ENCODE measurements at regions of chr5 and their contacts with region 1.

Region 1: GRCh38 chr5:150778517-150779396 is at the start of gene SMIM3:
- DNase-seq: peak; percentile 32 to 76 (median 48)
- H3K4me3 ChIP-seq: peak within 1 kb of the TSS; percentile 67
- H3K4me3 Mint-ChIP-seq: peak within 1 kb of the TSS; percentile 89 to 98 (median 95)
- H3K27ac ChIP-seq: peak within 1 kb of the TSS; percentile 59
- H3K27ac Mint-ChIP-seq: peak within 1 kb of the TSS; percentile 86 to 95 (median 92)
- H3K4me1 ChIP-seq: peaks cover 41% of the 10 kb centered on the region
- H3K4me1 Mint-ChIP-seq: peaks cover 51 to 63% (median 56%) of the 10 kb centered on the region in 3 donors
- H3K27me3 ChIP-seq: no peaks in the 10 kb centered on the region
- H3K27me3 Mint-ChIP-seq: peaks cover 6 to 7% of the 10 kb centered on the region in 2 donors
- total RNA-seq, gene SMIM3: 11.8 to 12.7 TPM

Region 2: DNA sequence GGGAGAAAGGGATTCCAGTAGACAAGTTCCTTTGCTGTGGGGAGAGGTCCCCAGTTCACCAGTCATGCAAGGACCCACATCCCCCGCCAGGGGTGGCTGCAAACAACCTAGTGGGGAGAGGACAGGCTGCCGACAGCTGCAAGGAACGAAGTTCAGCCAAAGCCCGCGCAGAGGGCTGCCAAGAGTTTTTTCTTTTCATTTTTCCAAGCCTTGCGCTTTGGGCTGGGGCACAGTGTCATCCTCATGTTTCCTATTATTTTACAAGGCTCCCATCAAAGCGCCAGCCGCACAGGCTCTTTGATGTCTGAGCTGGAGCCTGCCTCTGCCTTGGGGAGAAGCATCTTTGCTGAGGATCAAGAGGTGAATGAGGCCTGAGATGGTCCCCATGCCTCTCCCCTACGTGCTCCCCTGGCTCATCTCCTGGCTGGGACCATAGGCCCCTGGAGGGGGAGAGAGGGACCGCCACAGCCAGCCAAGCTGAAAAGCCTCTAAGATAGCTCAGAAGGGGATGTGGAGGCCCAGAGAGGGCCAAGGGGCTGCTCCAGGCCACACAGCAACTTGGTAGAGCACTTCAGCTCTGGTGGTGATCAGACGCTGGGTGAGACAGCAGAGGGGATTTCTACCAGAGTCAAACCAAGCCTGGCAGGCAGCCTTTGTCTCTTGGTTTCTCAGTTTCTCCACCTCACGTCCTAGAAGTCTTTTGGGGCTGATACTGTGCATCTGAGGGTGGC is 188.7 kb before region 1 on chr5:
- CTCF ChIA-PET with region 1: no interaction called
- POLR2A ChIA-PET with region 1: no interaction called
- DNase-seq: peak in 1 of 5 donors; percentile 33
- H3K4me3 ChIP-seq: no peak overlapping the region
- H3K4me3 Mint-ChIP-seq: no peak overlapping the region
- H3K27ac ChIP-seq: no peak overlapping the region
- H3K27ac Mint-ChIP-seq: no peak overlapping the region
- H3K4me1 ChIP-seq: no peaks in the 10 kb centered on the region
- H3K4me1 Mint-ChIP-seq: no peaks in the 10 kb centered on the region
- H3K27me3 ChIP-seq: no peaks in the 10 kb centered on the region
- H3K27me3 Mint-ChIP-seq: peaks cover 3 to 5% of the 10 kb centered on the region in 2 donors

Region 3: GRCh38 chr5:150758531-150759333 is 20.0 kb before region 1 on chr5 and contains the start of gene DCTN4:
- CTCF ChIA-PET with region 1: interaction called, 41 read pairs
- POLR2A ChIA-PET with region 1: interaction called, 29 read pairs
- DNase-seq: peak; percentile 91 to 95 (median 94)
- H3K4me3 ChIP-seq: peak within 1 kb of the TSS; percentile 92
- H3K4me3 Mint-ChIP-seq: peak within 1 kb of the TSS in 3 of 7 donors; percentile 48 to 72 (median 68)
- H3K27ac ChIP-seq: peak within 1 kb of the TSS; percentile 97
- H3K27ac Mint-ChIP-seq: peak within 1 kb of the TSS in 2 of 8 donors; percentile 3 to 45
- H3K4me1 ChIP-seq: peaks cover 34% of the 10 kb centered on the region
- H3K4me1 Mint-ChIP-seq: peaks cover 22 to 37% (median 31%) of the 10 kb centered on the region in 3 donors
- H3K27me3 ChIP-seq: no peaks in the 10 kb centered on the region
- H3K27me3 Mint-ChIP-seq: peaks cover 0 to 2% of the 10 kb centered on the region in 2 donors
- total RNA-seq, gene DCTN4: 37.0 to 39.6 TPM

Region 4: DNA sequence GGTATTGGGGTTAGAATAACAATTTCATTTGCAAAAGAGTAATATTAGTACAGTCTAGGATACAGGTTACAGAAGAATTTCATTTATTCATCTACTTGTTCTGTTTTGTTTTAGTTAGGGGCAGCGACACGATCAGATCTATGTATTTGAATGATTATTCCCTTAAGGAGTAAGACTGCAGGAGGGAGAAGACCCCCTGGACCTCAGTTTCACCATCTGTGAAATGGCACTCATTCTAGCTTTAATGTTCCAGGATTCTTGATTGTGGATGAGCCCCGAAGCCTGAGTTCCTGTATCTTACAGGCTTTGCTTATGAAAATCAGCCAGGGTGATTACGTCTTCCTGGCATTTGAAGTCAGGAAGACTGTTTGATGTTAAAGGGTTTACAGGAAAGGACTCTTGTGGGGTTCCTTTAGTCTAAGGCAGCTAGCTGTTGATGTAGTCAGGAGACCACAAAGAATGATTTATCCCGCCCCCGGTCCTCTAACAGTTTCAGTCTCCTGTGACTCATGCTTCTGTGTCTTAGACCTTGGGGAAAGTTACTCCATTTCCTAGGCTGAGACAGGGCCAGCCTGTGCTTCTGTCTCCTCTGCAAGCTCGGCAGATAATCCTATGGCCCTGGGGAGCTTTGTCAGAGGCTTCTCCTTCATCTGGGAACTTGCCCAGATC is 11.3 kb after region 1 on chr5:
- CTCF ChIA-PET with region 1: interaction called, 25 read pairs
- POLR2A ChIA-PET with region 1: interaction called, 7 read pairs
- DNase-seq: peak in 4 of 5 donors; percentile 12 to 69 (median 52)
- H3K4me3 ChIP-seq: peak overlapping the region; percentile 10
- H3K4me3 Mint-ChIP-seq: peak overlapping the region in 4 of 7 donors; percentile 1 to 35 (median 10)
- H3K27ac ChIP-seq: no peak overlapping the region
- H3K27ac Mint-ChIP-seq: peak overlapping the region in 6 of 8 donors; percentile 28 to 95 (median 68)
- H3K4me1 ChIP-seq: peaks cover 24% of the 10 kb centered on the region
- H3K4me1 Mint-ChIP-seq: peaks cover 26 to 56% (median 35%) of the 10 kb centered on the region in 3 donors
- H3K27me3 ChIP-seq: no peaks in the 10 kb centered on the region
- H3K27me3 Mint-ChIP-seq: no peaks in the 10 kb centered on the region

Region 5: GRCh38 chr5:150960791-150961396 is 182.1 kb after region 1 on chr5:
- CTCF ChIA-PET with region 1: no interaction called
- POLR2A ChIA-PET with region 1: no interaction called
- DNase-seq: no peak
- H3K4me3 ChIP-seq: no peak overlapping the region
- H3K4me3 Mint-ChIP-seq: no peak overlapping the region
- H3K27ac ChIP-seq: no peak overlapping the region
- H3K27ac Mint-ChIP-seq: no peak overlapping the region
- H3K4me1 ChIP-seq: no peaks in the 10 kb centered on the region
- H3K4me1 Mint-ChIP-seq: peaks cover 0 to 5% (median 4%) of the 10 kb centered on the region in 3 donors
- H3K27me3 ChIP-seq: no peaks in the 10 kb centered on the region
- H3K27me3 Mint-ChIP-seq: peaks cover 10 to 21% of the 10 kb centered on the region in 2 donors

Region 6: DNA sequence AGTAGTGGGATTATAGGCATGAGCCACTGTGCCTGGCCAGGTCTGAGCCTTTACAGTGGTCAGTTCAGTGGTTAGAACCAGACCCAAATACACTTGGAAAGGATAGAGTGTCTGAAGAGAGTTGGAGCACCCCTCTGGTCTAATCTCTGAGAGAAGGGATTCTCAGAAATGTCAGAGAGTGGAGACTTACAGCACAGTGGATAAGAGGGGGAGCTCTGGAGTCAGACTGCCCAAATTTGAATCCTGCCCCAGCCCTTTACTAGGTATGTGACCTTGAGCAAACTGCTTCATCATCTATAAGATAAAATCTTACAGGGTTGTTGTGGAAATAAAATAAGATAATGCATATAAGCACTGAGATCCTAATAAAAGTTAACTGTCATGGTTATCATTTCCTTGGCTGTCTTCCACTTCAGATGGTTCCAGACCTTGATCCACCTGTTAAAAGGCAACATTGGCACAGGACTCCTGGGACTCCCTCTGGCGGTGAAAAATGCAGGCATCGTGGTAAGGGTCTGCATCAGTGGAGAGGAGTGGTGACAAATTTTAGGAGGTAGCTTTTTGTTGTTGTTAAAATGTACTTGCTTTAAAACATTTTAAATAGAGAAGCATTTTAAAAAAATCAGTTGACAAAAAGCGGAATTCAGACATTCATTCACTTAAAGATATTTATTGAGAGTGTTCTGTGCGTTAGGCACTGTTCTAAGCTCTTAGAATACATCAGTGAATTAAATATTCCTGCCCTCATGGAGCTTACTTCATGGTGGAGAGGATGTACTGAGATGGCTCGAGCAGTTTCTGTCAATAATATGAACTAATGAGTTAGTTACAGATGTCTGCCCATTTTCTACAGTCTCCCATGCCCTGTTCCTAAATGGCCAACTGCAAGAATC is 684.6 kb after region 1 on chr5:
- CTCF ChIA-PET with region 1: no interaction called
- POLR2A ChIA-PET with region 1: no interaction called
- DNase-seq: no peak
- H3K4me3 ChIP-seq: no peak overlapping the region
- H3K4me3 Mint-ChIP-seq: no peak overlapping the region
- H3K27ac ChIP-seq: no peak overlapping the region
- H3K27ac Mint-ChIP-seq: peak overlapping the region in 1 of 8 donors; percentile 88
- H3K4me1 ChIP-seq: no peaks in the 10 kb centered on the region
- H3K4me1 Mint-ChIP-seq: no peaks in the 10 kb centered on the region
- H3K27me3 ChIP-seq: no peaks in the 10 kb centered on the region
- H3K27me3 Mint-ChIP-seq: no peaks in the 10 kb centered on the region

Measured in CD8-positive, alpha-beta memory T cell (primary cell).